CD8-positive, alpha-beta memory T cell (primary cell): ENCODE measurements at regions of chr11 and their contacts with region 1.

Region 1: DNA sequence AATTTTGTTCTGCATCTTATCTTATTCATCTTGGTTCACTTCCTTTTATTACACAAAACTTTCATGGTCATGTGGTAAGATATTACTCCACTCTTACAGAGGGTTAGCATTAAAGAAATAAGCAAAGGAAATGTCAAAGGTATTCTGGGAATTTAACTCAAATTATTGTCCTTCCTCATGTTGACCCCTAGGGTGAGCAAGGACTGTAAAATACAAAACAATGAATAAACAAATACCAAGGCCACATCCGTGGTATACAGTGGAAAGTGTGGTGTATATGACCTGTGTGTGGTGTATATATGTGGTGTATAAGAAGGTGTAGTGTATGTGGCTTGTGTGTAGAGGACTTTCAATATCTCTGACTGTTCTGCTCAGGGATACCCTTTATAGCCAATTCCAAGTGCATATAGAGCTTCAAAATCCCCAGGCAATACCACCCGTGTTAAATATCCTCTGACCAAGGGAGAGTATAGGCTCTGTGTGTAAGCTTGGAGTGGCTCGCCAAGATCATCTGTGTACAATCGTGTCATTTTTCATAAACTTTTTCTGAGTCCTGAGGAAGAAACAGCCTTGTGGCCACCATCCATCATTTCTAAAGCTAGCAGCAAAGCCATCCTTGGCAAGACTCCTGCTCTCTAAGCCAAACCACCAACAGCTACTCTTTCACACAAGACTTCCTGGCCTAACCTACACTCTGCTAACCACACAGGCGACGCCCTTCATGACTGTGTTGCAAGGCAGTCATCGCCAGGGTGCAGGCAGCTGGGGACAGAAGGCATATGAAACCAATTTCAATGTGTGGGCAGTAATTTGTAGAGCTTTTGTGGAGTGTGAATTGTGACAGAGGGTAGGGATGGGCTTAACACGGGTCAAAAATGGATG is 548.0 kb downstream of the ETS1 start:
- DNase-seq: peak; percentile 55 to 90 (median 76)
- H3K4me3 ChIP-seq: peak overlapping the region; percentile 41
- H3K4me3 Mint-ChIP-seq: no peak overlapping the region
- H3K27ac ChIP-seq: peak overlapping the region; percentile 60
- H3K27ac Mint-ChIP-seq: peak overlapping the region in 3 of 8 donors; percentile 44 to 92 (median 91)
- H3K4me1 ChIP-seq: peaks cover 84% of the 10 kb centered on the region
- H3K4me1 Mint-ChIP-seq: peaks cover 26 to 55% (median 28%) of the 10 kb centered on the region in 3 donors
- H3K27me3 ChIP-seq: no peaks in the 10 kb centered on the region
- H3K27me3 Mint-ChIP-seq: no peaks in the 10 kb centered on the region

Region 2: DNA sequence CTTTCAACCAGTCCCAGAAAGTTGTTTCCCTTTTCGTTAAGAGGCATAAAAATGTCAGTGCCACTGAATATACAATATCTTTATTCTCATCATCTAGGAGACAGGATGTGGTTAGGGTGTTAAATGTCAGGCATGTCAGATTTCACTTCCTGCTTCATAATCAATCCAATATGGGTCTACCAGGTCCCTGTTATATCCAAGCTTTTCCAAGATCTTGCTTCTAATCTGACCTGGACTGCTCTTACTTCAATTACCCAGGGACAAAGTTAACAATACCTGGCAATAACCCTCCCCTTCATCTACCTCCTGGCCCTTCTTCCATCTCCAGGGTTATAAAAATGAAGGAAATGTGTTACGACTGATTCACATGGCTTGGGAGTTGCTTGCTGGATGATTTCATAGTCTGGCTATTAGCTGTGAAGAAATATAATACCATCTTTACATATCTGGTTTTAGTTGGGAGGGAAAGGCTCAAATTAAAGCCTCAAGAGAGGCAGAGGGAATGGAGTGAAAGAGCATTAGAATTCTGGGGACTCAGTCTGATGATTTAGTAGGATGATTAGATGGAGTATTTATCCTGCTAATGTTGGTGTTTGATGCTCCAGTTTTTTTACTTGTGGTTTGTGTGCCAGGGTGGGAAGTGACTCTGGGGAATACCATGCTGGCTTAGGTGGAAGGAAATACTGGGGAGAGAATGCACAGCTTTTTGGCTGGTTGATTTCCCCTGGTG is 13.7 kb after region 1 on chr11:
- CTCF ChIA-PET with region 1: interaction called, 64 read pairs
- POLR2A ChIA-PET with region 1: interaction called, 20 read pairs
- DNase-seq: peak in 2 of 5 donors; percentile 49 to 57
- H3K4me3 ChIP-seq: peak overlapping the region; percentile 17
- H3K4me3 Mint-ChIP-seq: peak overlapping the region; percentile 57 to 84 (median 81)
- H3K27ac ChIP-seq: peak overlapping the region; percentile 10
- H3K27ac Mint-ChIP-seq: peak overlapping the region; percentile 84 to 99 (median 87)
- H3K4me1 ChIP-seq: peaks cover 69% of the 10 kb centered on the region
- H3K4me1 Mint-ChIP-seq: peaks cover 62 to 84% (median 81%) of the 10 kb centered on the region in 3 donors
- H3K27me3 ChIP-seq: no peaks in the 10 kb centered on the region
- H3K27me3 Mint-ChIP-seq: no peaks in the 10 kb centered on the region

Region 3: DNA sequence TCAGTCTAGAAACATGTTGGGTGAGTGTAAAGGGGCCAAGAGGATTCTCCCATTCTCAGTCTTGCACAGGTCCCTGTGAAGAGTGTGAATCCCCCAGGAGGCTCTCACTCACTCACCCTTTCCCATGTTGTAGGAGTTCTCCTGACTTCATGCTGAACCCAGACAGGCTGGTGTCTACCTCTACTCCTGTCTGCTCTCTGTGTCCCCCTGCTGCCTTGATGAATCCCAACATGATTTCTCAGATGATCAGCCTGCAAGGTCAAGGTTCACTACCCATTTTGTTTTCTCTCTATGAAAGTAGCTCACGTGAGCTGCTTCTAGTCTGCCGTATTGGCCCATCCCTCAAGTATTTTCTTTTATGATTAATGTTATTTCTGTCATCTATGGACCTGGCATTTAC is 47.4 kb after region 1 on chr11:
- CTCF ChIA-PET with region 1: interaction called, 38 read pairs
- POLR2A ChIA-PET with region 1: interaction called, 3 read pairs
- DNase-seq: peak in 3 of 5 donors; percentile 8 to 48 (median 11)
- H3K4me3 ChIP-seq: no peak overlapping the region
- H3K4me3 Mint-ChIP-seq: peak overlapping the region in 5 of 7 donors; percentile 5 to 38 (median 18)
- H3K27ac ChIP-seq: no peak overlapping the region
- H3K27ac Mint-ChIP-seq: peak overlapping the region in 7 of 8 donors; percentile 0 to 81 (median 38)
- H3K4me1 ChIP-seq: peaks cover 26% of the 10 kb centered on the region
- H3K4me1 Mint-ChIP-seq: peaks cover 46 to 57% (median 53%) of the 10 kb centered on the region in 3 donors
- H3K27me3 ChIP-seq: no peaks in the 10 kb centered on the region
- H3K27me3 Mint-ChIP-seq: peaks cover 0 to 4% of the 10 kb centered on the region in 2 donors

Region 4: DNA sequence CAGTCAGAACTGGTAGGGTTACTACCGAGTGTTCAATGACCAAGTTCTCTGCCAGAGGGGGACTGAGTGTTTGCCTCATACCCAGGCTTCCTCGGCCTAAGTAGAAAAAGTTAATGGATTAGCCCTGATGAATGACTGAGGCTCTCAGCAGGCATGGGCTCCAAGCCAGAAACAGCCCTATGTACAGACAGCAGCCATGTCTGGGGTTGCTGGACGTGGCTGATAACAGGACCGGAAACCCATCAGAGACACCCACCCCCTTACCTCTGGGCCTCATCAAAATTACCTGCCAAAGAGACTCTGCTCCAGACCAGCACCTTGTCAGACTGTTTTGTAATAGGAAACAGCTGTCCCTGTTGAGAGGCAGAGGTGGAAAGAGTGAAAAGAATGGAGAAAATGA is 196.6 kb after region 1 on chr11:
- CTCF ChIA-PET with region 1: no interaction called
- POLR2A ChIA-PET with region 1: no interaction called
- DNase-seq: no peak
- H3K4me3 ChIP-seq: no peak overlapping the region
- H3K4me3 Mint-ChIP-seq: no peak overlapping the region
- H3K27ac ChIP-seq: no peak overlapping the region
- H3K27ac Mint-ChIP-seq: no peak overlapping the region
- H3K4me1 ChIP-seq: no peaks in the 10 kb centered on the region
- H3K4me1 Mint-ChIP-seq: peaks cover 14 to 19% (median 17%) of the 10 kb centered on the region in 3 donors
- H3K27me3 ChIP-seq: no peaks in the 10 kb centered on the region
- H3K27me3 Mint-ChIP-seq: no peaks in the 10 kb centered on the region